ENCODE measurements at regions of chr11 and their contacts with region 1.

Region 1: DNA sequence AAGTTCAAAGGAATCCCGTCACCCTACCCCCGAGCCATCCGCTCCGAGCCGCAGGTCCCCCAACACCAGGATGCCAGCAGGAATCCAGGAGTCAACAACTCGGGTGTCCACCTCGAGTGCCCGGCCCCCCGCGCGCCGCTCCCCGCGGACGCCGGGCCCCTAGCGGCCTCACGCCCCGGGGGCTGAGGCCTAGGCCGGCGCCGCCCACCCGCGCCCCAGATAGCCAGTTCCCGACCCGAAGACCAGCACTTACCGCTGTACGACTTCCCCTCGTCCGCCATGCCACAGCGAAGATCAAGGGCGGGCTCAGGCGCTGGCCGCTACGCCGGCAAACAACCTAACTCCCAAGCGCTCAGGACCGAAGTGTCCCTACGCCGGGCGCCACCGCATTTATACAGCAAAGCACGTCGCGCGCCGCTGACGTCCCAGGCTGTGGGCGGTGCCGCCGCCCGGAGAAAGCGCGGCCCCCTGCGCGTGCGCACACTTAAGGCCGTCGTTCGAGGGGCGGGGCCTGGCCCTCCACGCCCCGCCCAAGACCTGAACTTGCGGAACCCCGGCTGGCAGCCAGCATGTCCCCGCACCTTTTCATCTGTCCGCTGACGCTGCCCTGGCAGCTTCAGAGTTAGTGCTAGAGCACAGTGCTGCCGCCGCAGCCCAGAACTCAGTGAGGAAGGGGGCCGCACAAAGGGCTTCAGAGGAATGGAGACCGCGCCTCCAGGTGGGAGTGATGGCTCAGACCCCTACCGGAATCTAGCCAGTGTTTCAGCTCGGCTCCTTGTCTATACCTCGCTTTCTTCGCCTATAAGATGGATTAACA is at the start of gene NXF1:
- DNase-seq: peak; percentile 96 to 100
- H3K4me3 ChIP-seq: peak within 1 kb of the TSS; percentile 66 to 85 (median 81)
- H3K27ac ChIP-seq: peak within 1 kb of the TSS; percentile 48; the same call in 1 of the 2 replicates
- H3K4me1 ChIP-seq: peaks cover 0 to 5% (median under 1%) of the 10 kb centered on the region in 4 experiments; a peak in 1 of 7 replicates
- H3K27me3 ChIP-seq: no peaks in the 10 kb centered on the region
- CTCF ChIP-seq: peak in 1 of 3 experiments; percentile 20; a peak in 1 of 4 replicates
- EP300 ChIP-seq: peak in 1 of 2 experiments; percentile 65; a peak in 1 of 3 replicates
- POLR2A ChIP-seq: peak; percentile 100
- RAD21 ChIP-seq: 0 out of 4 replicates have a peak, but pooled peaks of 1 of the 2 experiments have one; percentile 4
- total RNA-seq, gene NXF1: 44.8 and 49.8 TPM in 2 replicates

Region 2: GRCh38 chr11:62383822-62384221 is 421.5 kb before region 1 on chr11:
- CTCF ChIA-PET with region 1: no interaction called
- POLR2A ChIA-PET with region 1: no interaction called
- DNase-seq: no peak
- H3K4me3 ChIP-seq: no peak overlapping the region
- H3K27ac ChIP-seq: no peak overlapping the region
- H3K4me1 ChIP-seq: no peaks in the 10 kb centered on the region
- H3K27me3 ChIP-seq: no peaks in the 10 kb centered on the region
- CTCF ChIP-seq: no peak
- EP300 ChIP-seq: no peak
- POLR2A ChIP-seq: no peak
- RAD21 ChIP-seq: no peak

Region 3: GRCh38 chr11:62645956-62646824 is 159.1 kb before region 1 on chr11 and contains the start of gene GANAB:
- CTCF ChIA-PET with region 1: no interaction called
- POLR2A ChIA-PET with region 1: no interaction called
- DNase-seq: peak; percentile 87 to 96
- H3K4me3 ChIP-seq: peak within 1 kb of the TSS; percentile 71 to 99 (median 90)
- H3K27ac ChIP-seq: peak within 1 kb of the TSS; percentile 90
- H3K4me1 ChIP-seq: no peaks in the 10 kb centered on the region; a peak in 2 of 7 replicates
- H3K27me3 ChIP-seq: no peaks in the 10 kb centered on the region
- CTCF ChIP-seq: no peak
- EP300 ChIP-seq: no peak
- POLR2A ChIP-seq: peak; percentile 82 to 99
- RAD21 ChIP-seq: no peak
- total RNA-seq, gene GANAB: 326 and 330 TPM in 2 replicates

Region 4: DNA sequence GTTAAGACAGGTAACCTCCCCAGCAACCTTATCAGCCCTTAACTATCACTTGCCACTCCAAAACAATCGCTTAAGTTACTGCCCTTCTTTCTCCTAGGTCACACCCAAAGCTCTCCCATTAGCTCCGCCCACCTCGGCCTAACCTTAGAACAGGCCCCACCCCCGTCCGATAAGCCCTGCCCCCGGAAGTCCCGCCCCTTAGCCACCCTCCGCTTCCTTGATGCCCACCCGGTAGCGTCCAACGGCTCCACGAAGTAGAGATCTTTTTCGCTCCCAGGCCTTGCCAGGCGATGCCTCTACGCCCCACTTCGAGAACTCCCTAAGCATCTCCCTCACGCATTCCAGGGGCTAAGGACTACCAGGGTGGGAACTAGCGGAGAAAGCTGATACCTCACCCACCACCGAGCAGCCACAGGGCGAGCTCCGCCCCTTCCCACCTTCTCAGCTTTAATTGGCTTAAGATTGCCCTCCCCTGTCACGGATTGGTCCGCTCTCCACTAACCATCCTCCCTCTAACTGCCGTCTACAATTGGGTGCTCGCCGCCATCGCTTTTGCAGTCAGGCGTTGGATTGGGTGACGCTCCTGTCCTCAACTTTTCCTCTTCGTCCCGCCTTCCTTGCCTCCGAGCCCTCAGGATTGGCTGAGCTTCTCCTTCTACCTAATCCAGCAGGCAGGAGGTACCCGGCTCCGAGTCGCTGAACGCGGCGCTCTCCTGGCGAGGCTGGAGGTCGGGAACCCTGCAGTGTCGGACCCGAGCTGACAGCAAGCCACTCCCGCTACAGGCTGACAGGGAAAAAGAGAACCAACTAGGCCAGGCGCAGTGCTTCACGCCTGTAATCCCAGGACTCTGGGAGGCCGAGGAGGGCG is 51.3 kb before region 1 on chr11 and contains the start of gene ZBTB3:
- CTCF ChIA-PET with region 1: interaction called, 3 read pairs
- POLR2A ChIA-PET with region 1: interaction called, 11 read pairs
- DNase-seq: peak; percentile 97 to 99
- H3K4me3 ChIP-seq: peak within 1 kb of the TSS; percentile 74 to 89 (median 82)
- H3K27ac ChIP-seq: peak within 1 kb of the TSS; percentile 86
- H3K4me1 ChIP-seq: peaks cover 4 to 9% (median 6%) of the 10 kb centered on the region in 4 experiments
- H3K27me3 ChIP-seq: no peaks in the 10 kb centered on the region
- CTCF ChIP-seq: no peak
- EP300 ChIP-seq: no peak
- POLR2A ChIP-seq: peak; percentile 37 to 79
- RAD21 ChIP-seq: 0 out of 4 replicates have a peak, but pooled peaks of 1 of the 2 experiments have one; percentile 6
- total RNA-seq, gene ZBTB3: 76.5 and 76.9 TPM in 2 replicates

Region 5: DNA sequence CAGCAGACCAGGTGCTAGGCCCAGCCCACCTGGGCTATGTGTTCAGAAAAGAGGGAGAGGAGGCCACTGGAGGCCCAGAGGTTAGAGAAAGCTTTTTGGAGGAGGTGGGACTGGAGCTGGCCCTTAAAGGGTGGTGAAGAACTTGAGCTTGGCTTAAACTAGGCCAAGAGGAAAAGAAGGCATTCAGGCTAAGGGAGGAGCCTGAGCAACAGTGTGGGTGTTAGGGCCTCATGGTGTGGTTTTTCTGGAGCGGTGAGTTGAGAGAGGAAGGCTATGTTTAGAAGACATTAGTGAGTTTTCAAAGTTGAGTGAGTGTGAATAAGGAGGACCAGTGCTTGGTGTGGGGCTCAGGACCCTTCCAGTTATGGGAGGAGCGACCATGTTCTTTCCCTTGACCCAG is 27.9 kb before region 1 on chr11:
- CTCF ChIA-PET with region 1: no interaction called
- POLR2A ChIA-PET with region 1: interaction called, 11 read pairs
- DNase-seq: no peak
- H3K4me3 ChIP-seq: no peak overlapping the region
- H3K27ac ChIP-seq: no peak overlapping the region
- H3K4me1 ChIP-seq: no peaks in the 10 kb centered on the region
- H3K27me3 ChIP-seq: no peaks in the 10 kb centered on the region
- CTCF ChIP-seq: no peak
- EP300 ChIP-seq: no peak
- POLR2A ChIP-seq: no peak
- RAD21 ChIP-seq: no peak

Region 6: DNA sequence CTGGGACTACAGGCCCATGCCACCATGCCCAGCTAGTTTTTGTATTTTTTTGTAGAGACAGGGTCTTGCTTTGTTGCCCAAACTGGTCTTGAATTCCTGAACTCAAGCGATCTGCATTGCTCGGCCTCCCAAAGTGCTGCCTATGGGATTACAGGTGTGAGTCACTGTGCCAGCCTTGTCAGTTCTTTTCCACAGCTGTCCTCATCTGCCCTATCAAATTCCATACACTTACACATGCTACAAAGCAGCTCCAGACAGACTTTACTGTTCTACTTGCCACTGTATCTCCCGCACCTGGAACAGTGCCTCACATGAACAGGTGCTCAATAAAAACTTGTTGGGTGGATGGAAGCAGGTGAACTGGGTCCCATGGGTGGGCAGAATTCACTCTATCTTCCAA is 18.4 kb after region 1 on chr11:
- CTCF ChIA-PET with region 1: interaction called, 4 read pairs
- POLR2A ChIA-PET with region 1: interaction called, 41 read pairs
- DNase-seq: no peak
- H3K4me3 ChIP-seq: no peak overlapping the region
- H3K27ac ChIP-seq: no peak overlapping the region
- H3K4me1 ChIP-seq: no peaks in the 10 kb centered on the region
- H3K27me3 ChIP-seq: no peaks in the 10 kb centered on the region
- CTCF ChIP-seq: no peak
- EP300 ChIP-seq: no peak
- POLR2A ChIP-seq: no peak
- RAD21 ChIP-seq: no peak

Region 7: DNA sequence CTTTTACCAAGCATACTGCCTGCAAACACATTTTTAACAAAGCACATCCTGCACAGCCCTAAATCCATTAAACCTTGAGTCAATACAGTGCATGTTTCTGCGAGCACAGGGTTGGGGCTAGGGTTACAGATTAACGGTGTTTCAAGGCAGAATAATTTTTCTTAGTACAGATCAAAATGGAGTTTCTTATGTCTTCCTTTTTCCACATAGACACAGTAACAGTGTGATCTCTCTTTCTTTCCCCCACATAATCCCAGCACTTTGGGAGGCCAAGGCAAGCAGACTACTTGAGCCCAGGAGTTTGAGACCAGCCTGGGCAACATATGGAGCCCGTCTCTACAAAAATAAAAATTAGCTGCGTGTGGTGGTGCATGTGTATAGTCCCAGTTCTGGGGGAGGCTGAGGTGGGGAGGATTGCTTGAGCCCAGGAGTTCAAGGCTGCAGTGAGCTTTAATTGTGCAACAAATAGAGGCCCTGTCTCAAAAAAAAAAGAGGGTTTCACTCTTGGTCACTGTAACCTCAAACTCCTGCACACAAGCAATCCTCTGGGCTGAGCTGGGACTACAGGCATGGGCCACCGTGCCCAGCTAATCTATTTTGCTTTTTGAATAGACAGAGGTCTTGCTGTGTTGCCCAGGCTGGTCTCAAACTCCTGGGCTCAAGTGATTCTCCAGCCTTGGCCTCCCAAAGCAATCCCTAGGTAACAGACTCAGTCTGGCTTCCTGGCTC is 55.7 kb after region 1 on chr11:
- CTCF ChIA-PET with region 1: interaction called, 6 read pairs
- POLR2A ChIA-PET with region 1: interaction called, 67 read pairs
- DNase-seq: no peak
- H3K4me3 ChIP-seq: no peak overlapping the region
- H3K27ac ChIP-seq: no peak overlapping the region
- H3K4me1 ChIP-seq: peaks cover 0 to 10% (median 6%) of the 10 kb centered on the region in 4 experiments; a peak in 4 of 7 replicates
- H3K27me3 ChIP-seq: no peaks in the 10 kb centered on the region
- CTCF ChIP-seq: no peak
- EP300 ChIP-seq: no peak
- POLR2A ChIP-seq: no peak
- RAD21 ChIP-seq: no peak

Region 8: DNA sequence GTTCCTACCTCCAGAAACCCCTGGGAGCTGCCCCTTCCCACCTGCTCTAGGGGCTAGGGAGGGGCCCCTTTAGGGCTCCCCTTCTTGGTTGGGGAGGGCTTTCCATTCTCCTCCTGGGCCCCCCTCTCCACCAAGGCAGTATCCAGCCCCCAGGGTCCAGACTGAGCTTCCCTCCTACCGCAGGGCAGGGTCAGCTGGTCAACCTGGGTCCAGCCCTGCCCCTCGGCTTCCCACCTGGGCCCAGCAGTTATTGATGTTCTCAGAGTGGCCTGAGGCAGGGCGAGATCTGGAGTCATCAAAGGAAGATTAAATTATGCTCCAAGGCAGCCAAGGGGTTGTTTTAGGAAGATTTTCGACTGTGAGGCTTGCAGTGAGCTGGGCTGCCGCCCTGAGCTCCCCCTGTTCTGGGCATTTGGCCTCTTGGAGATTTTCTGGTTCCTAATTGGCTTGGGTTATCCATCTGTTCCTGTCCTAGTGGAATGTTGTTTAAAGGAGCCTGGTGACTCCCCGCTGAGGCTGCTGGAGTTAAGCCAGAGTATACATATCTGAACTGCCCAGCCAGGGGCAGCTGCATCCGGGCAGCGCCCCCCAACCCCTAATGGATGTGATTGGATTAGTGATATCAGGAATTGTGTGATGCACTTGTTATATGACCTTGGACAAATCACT is 212.2 kb after region 1 on chr11:
- CTCF ChIA-PET with region 1: no interaction called
- POLR2A ChIA-PET with region 1: no interaction called
- DNase-seq: no peak
- H3K4me3 ChIP-seq: no peak overlapping the region
- H3K27ac ChIP-seq: no peak overlapping the region
- H3K4me1 ChIP-seq: peaks cover 0 to 12% (median 8%) of the 10 kb centered on the region in 4 experiments; a peak in 5 of 7 replicates
- H3K27me3 ChIP-seq: no peaks in the 10 kb centered on the region; a peak in 1 of 7 replicates
- CTCF ChIP-seq: no peak
- EP300 ChIP-seq: no peak
- POLR2A ChIP-seq: no peak
- RAD21 ChIP-seq: no peak

Measured in H1 (cell line).